ENCODE measurements at regions of chr1 and their contacts with region 1.

Region 1: GRCh38 chr1:152640351-152640750 is 17.4 kb upstream of the LCE3A start:
- DNase-seq: no peak
- ATAC-seq: no peak
- H3K4me3 ChIP-seq: no peak overlapping the region
- H3K27ac ChIP-seq: no peak overlapping the region
- H3K4me1 ChIP-seq: no peaks in the 10 kb centered on the region
- CTCF ChIP-seq: no peak
- EP300 ChIP-seq: no peak
- POLR2A ChIP-seq: no peak
- RAD21 ChIP-seq: no peak

Region 2: DNA sequence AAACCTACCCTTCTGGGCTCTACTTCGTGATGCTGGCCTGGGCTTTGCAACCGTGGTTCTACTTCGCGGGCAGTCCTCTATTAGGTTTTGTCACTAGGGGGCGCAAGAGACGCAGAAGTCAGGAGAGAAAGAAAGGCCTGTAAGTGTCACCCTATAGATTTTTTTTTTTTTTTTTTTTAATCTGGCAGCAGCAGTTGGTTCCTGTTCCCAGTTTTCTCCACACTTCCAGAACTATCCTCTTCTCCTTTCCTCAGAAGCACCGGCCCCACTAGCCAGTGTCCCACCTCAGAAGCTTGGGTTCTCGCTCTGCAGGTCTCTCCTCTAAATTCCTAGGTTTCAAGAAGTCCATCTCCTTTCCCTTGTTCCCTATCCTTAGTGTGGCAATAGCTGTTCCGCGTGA is 13.8 kb after region 1 on chr1:
- CTCF ChIA-PET with region 1: interaction called, 34 read pairs
- POLR2A ChIA-PET with region 1: no interaction called
- DNase-seq: peak; percentile 47 to 62
- ATAC-seq: peak; percentile 88 to 95
- H3K4me3 ChIP-seq: no peak overlapping the region
- H3K27ac ChIP-seq: no peak overlapping the region
- H3K4me1 ChIP-seq: no peaks in the 10 kb centered on the region
- CTCF ChIP-seq: peak; percentile 68
- EP300 ChIP-seq: no peak
- POLR2A ChIP-seq: no peak
- RAD21 ChIP-seq: peak; percentile 61 to 69